ENCODE measurements at regions of chr11 and their contacts with region 1.

Region 1: DNA sequence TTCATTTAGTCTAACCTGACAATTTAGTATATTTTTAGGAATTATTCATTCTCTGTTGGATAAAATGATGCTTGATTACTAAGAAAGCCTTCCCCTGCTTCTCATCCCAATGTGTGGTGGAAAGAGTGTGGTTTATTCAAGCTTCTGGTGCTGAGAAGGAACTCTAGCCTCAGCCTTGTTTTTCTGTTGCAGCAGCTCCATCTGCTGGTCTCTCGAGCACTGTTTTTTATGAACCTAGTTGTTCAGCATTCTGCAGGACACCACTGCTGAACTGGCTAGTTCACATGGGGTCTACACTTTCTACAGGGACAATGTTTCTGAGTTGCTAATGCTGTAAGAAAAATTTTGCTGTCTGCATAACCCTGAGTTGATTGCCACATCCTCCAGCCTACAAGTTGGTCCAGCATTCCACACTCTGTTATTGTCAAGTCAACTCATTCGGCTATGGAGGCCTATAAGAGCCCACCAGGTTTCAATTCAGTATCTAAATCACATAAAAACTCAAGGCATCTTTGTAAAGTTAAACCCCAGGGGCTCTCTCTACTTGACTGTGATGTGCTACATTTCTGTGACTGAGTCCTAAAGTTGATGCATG is 14.3 kb downstream of the OR2AG2 start:
- DNase-seq: peak; percentile 72
- ATAC-seq: peak; percentile 88
- H3K4me3 Mint-ChIP-seq: no peak overlapping the region
- H3K27ac Mint-ChIP-seq: no peak overlapping the region
- H3K4me1 Mint-ChIP-seq: peaks cover 1% of the 10 kb centered on the region
- H3K27me3 Mint-ChIP-seq: peaks cover 4% of the 10 kb centered on the region

Region 2: GRCh38 chr11:6737872-6738466 is 19.5 kb before region 1 on chr11:
- CTCF ChIA-PET with region 1: interaction called, 357 read pairs
- DNase-seq: peak; percentile 77
- ATAC-seq: peak; percentile 82
- H3K4me3 Mint-ChIP-seq: no peak overlapping the region
- H3K27ac Mint-ChIP-seq: peak overlapping the region; percentile 64
- H3K4me1 Mint-ChIP-seq: peaks cover 88% of the 10 kb centered on the region
- H3K27me3 Mint-ChIP-seq: no peaks in the 10 kb centered on the region